ENCODE measurements at regions of chr5 and their contacts with region 1.

Region 1: GRCh38 chr5:59873113-59873512 is 20.4 kb downstream of the PDE4D start:
- DNase-seq: peak in 1 of 2 experiments; percentile 41
- H3K4me3 ChIP-seq: no peak overlapping the region
- H3K27ac ChIP-seq: no peak overlapping the region; the same call in 1 of the 2 replicates
- H3K4me1 ChIP-seq: peaks cover 29% of the 10 kb centered on the region
- H3K27me3 ChIP-seq: no peaks in the 10 kb centered on the region
- CTCF ChIP-seq: no peak

Region 2: DNA sequence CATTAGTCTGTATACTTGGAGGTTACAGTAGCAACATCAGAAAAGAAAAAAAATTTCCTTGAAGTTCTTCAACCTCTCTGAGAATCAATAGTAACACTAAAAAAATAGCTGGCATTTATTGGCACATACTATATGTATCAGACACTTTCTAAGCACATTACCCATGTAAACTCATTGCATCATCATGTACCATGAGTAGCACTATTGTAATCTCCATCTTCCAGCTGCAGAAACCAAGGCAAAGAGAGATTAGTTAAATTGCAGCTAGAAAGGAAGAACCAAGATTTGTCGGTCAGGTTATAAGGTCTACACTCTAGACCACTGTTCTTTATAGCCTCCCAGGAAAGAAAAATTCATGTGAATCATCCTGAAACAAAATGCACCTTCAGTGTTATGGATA is 1321.6 kb before region 1 on chr5:
- CTCF ChIA-PET with region 1: no interaction called
- POLR2A ChIA-PET with region 1: no interaction called
- intact Hi-C with region 1: no loop called
- DNase-seq: no peak
- H3K4me3 ChIP-seq: no peak overlapping the region
- H3K27ac ChIP-seq: no peak overlapping the region
- H3K4me1 ChIP-seq: no peaks in the 10 kb centered on the region
- H3K27me3 ChIP-seq: no peaks in the 10 kb centered on the region
- CTCF ChIP-seq: no peak

Region 3: GRCh38 chr5:59088546-59088945 is 784.6 kb before region 1 on chr5:
- CTCF ChIA-PET with region 1: no interaction called
- POLR2A ChIA-PET with region 1: interaction called, 10 read pairs
- intact Hi-C with region 1: no loop called
- DNase-seq: no peak
- H3K4me3 ChIP-seq: no peak overlapping the region
- H3K27ac ChIP-seq: no peak overlapping the region
- H3K4me1 ChIP-seq: no peaks in the 10 kb centered on the region
- H3K27me3 ChIP-seq: no peaks in the 10 kb centered on the region
- CTCF ChIP-seq: no peak

Region 4: GRCh38 chr5:59460368-59461153 is 412.6 kb before region 1 on chr5:
- CTCF ChIA-PET with region 1: no interaction called
- POLR2A ChIA-PET with region 1: no interaction called
- intact Hi-C with region 1: no loop called
- DNase-seq: no peak
- H3K4me3 ChIP-seq: no peak overlapping the region
- H3K27ac ChIP-seq: no peak overlapping the region
- H3K4me1 ChIP-seq: no peaks in the 10 kb centered on the region
- H3K27me3 ChIP-seq: no peaks in the 10 kb centered on the region
- CTCF ChIP-seq: no peak

Region 5: DNA sequence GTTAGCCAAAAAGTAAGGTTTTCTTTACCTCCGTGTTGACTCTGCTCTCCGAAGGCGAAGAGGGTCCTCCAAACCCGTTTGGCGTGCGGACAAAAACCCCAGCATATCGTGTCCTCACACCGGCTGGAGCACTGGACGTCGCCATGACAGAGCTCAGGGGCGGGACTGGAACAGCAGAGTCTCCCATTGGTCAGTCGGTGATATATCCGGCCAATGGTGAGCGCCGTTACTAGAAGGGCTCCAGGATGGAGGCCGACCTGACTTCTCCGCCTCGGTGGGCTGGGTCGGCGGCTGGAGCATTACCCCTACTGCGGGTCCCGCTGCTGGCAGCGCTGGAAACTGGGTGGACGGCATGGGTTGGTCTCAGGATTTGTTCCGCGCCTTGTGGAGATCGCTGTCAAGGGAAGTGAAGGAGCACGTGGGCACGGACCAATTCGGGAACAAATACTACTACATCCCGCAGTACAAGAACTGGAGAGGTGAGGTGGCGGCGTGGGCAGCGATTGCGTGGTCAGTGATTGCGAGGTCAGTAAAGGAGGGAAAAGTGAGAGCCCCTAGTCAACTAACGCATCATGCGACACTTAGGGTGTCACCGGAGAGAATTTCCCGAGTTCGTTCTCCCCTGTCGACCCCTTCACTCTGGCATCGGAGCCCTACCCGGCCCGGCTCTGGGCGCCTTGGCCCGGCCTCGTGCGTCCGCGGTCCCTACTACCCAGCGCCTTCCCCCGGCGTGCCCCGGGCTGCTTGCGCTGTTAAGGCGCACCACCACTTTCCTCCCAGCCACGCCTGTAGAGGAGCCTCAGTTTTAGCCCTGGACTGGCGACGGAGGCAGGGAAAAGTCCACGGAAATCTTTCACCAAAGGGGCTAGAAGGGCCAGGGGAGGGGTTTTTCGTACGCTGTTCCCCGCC is 1072.0 kb after region 1 on chr5 and contains the starts of genes ERCC8 and NDUFAF2:
- CTCF ChIA-PET with region 1: no interaction called
- POLR2A ChIA-PET with region 1: interaction called, 43 read pairs
- intact Hi-C with region 1: no loop called
- DNase-seq: peak; percentile 84 to 86
- H3K4me3 ChIP-seq: peak within 1 kb of the TSS; percentile 98
- H3K27ac ChIP-seq: peak within 1 kb of the TSS; percentile 70
- H3K4me1 ChIP-seq: peaks cover 26% of the 10 kb centered on the region
- H3K27me3 ChIP-seq: no peaks in the 10 kb centered on the region
- CTCF ChIP-seq: no peak
- total RNA-seq, gene ERCC8: 8.7 and 13.0 TPM in 2 replicates
- total RNA-seq, gene NDUFAF2: 20.7 and 42.7 TPM in 2 replicates

Measured in PC-9 (cell line).